ENCODE measurements at regions of chr6 and their contacts with region 1.

Region 1: DNA sequence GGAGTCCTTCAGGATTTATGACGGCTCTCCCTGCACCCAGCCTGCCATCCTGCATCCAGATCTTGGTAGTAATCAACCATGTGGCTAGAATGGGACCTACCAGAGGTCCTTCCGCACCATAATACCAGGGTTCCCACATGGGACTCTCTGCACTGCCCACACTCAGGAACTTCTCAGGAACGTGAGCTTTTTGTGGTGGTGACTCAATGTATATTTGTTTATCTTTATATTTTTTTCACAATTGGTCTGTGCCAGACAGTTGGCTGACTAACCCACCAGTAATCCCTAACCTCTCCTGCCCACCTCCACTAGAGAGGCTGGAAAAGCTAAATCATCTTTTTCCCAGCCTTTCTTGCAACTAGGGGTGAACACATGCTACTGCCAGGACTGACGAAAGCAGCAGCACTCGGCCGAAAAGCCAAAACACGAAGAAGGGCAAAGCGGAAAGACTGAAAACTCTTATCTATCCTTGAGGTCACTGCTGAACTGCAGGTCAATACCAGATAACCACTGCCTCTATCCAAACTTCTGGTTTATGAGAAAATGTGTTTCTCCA is 113.0 kb downstream of the TRERF1 start:
- DNase-seq: peak; percentile 42
- ATAC-seq: peak; percentile 28
- H3K4me3 Mint-ChIP-seq: peak overlapping the region; percentile 8
- H3K27ac Mint-ChIP-seq: peak overlapping the region; percentile 84
- H3K4me1 Mint-ChIP-seq: peaks cover 67% of the 10 kb centered on the region
- H3K27me3 Mint-ChIP-seq: no peaks in the 10 kb centered on the region

Region 2: DNA sequence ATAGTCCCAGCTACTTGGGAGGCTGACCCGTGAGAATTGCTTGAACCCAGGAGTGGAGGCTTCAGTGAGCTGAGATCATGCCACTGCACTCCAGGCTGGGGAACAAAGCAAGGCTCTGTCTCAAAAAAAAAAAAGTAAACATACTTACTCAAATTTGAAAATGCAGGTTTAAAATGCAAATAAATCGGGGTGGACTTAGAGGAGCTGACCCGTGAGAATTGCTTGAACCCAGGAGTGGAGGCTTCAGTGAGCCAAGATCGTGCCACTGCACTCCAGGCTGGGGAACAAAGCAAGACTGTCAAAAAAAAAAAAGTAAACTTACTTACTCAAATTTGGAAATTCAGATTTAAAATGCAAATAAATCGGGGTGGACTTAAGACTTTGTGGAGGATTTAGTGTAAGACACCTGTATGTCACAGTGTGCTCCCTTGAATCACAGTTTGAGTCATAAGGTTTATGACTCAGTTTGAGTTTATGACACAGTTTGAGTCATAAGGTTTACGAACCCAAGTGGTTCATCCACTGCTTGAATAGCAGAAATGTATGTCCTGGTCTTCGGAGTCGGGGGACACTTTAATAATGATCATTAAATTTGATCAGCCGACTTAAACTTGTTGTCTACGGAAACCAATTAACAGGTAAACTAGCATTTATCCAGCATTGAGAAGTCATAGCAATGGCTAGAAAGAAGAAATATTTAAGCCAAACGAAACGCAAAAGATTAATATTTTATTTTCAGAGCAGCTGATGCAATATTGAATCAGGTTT is 114.3 kb before region 1 on chr6:
- CTCF ChIA-PET with region 1: no interaction called
- POLR2A ChIA-PET with region 1: no interaction called
- intact Hi-C with region 1: loop called (anchors 1 kb)
- DNase-seq: no peak
- ATAC-seq: peak; percentile 98
- H3K4me3 Mint-ChIP-seq: peak overlapping the region; percentile 47
- H3K27ac Mint-ChIP-seq: peak overlapping the region; percentile 73
- H3K4me1 Mint-ChIP-seq: peaks cover 26% of the 10 kb centered on the region
- H3K27me3 Mint-ChIP-seq: no peaks in the 10 kb centered on the region

Region 3: GRCh38 chr6:42352856-42353564 is 14.3 kb after region 1 on chr6:
- CTCF ChIA-PET with region 1: interaction called, 3 read pairs
- POLR2A ChIA-PET with region 1: interaction called, 4 read pairs
- intact Hi-C with region 1: loop called (anchors 1 kb)
- DNase-seq: no peak
- ATAC-seq: no peak
- H3K4me3 Mint-ChIP-seq: no peak overlapping the region
- H3K27ac Mint-ChIP-seq: no peak overlapping the region
- H3K4me1 Mint-ChIP-seq: peaks cover 17% of the 10 kb centered on the region
- H3K27me3 Mint-ChIP-seq: no peaks in the 10 kb centered on the region

Region 4: DNA sequence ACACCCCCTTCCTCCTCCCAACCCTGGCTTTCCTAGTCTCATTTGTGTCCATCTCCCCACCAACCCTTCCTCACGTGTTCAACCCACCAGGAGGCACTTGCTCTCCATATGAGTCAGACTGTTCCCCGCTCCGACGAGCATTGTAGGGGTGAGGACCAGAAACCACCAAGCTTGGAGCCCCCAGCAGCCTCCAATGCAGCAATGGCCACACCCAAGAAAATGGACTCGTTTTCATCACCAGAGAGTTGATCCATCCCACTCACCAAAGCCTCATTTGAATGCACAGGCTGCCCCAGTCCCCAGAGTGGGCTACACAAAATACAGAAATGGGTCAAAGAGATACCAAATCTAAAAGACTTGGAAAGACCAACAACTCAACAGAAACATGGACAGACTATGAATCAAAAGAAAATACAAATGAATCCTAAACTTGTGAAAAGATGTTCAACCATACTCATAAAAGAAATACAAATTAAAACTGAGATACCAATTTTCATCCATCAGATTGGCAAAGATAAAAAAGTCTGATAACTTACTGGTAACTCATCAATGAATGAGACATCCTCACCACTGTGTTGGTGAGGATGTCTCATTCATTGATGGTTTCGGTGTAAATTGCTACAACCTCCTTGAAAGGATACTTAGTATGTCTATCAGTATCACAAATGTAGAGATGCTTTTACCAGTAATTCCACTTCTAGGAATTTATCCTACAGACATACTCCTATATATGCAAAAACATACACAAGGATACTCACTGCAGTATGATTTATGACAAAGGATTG is 44.9 kb after region 1 on chr6:
- CTCF ChIA-PET with region 1: interaction called, 4 read pairs
- POLR2A ChIA-PET with region 1: interaction called, 3 read pairs
- intact Hi-C with region 1: loop called (anchors 1 to 2 kb)
- DNase-seq: peak; percentile 30
- ATAC-seq: peak; percentile 80
- H3K4me3 Mint-ChIP-seq: peak overlapping the region; percentile 8
- H3K27ac Mint-ChIP-seq: peak overlapping the region; percentile 80
- H3K4me1 Mint-ChIP-seq: peaks cover 84% of the 10 kb centered on the region
- H3K27me3 Mint-ChIP-seq: no peaks in the 10 kb centered on the region

Region 5: GRCh38 chr6:42402184-42402583 is 63.4 kb after region 1 on chr6:
- CTCF ChIA-PET with region 1: interaction called, 4 read pairs
- POLR2A ChIA-PET with region 1: interaction called, 3 read pairs
- intact Hi-C with region 1: loop called in 1 of 2 experiments (anchors 1 kb)
- DNase-seq: peak; percentile 78
- ATAC-seq: peak; percentile 85
- H3K4me3 Mint-ChIP-seq: peak overlapping the region; percentile 18
- H3K27ac Mint-ChIP-seq: peak overlapping the region; percentile 69
- H3K4me1 Mint-ChIP-seq: peaks cover 83% of the 10 kb centered on the region
- H3K27me3 Mint-ChIP-seq: no peaks in the 10 kb centered on the region

Region 6: GRCh38 chr6:42453031-42453653 is 114.4 kb after region 1 on chr6:
- CTCF ChIA-PET with region 1: interaction called, 3 read pairs
- POLR2A ChIA-PET with region 1: no interaction called
- intact Hi-C with region 1: loop called in 1 of 2 experiments (anchors 1 kb)
- DNase-seq: peak; percentile 87
- ATAC-seq: peak; percentile 76
- H3K4me3 Mint-ChIP-seq: peak overlapping the region; percentile 83
- H3K27ac Mint-ChIP-seq: no peak overlapping the region
- H3K4me1 Mint-ChIP-seq: peaks cover 34% of the 10 kb centered on the region
- H3K27me3 Mint-ChIP-seq: peaks cover 5% of the 10 kb centered on the region

Measured in activated CD4-positive, alpha-beta T cell treated with anti-CD3 and anti-CD28 coated beads for 36 hours (primary cell).